ENCODE measurements at regions of chr9 and their contacts with region 1.

Region 1: GRCh38 chr9:4792572-4793458 is at the start of gene RCL1:
- DNase-seq: peak; percentile 96
- ATAC-seq: peak; percentile 99 to 100
- total RNA-seq, gene RCL1: 6.0 to 10.1 TPM

Region 2: DNA sequence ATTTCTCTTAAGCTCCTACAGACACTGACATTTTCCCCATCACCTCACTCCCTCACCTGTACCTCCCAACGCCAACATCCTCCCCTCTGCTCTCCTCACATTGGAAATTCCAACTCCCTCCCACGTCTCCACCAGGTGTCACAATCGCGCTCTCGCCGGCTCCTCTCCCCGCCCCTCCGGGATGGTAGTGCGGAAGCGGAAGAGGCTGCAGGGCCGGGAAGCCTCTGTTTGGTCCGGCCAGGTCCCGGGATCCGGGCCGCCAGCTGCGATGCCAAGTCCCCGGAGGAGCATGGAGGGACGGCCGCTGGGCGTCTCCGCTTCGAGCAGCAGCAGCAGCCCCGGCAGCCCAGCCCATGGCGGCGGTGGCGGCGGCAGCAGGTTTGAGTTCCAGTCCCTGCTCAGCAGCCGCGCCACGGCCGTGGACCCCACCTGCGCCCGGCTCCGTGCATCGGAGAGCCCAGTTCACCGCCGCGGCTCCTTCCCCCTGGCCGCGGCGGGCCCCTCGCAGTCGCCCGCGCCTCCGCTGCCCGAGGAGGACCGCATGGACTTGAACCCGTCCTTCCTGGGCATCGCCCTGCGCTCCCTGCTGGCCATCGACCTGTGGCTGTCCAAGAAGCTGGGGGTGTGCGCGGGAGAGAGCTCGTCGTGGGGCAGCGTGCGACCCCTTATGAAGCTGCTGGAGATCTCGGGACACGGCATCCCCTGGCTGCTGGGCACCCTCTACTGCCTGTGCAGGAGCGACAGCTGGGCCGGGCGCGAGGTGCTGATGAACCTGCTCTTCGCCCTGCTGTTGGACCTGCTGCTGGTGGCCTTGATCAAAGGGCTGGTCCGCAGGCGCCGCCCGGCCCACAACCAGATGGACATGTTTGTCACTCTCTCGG is 130.5 kb before region 1 on chr9 and contains the start of gene PLPP6:
- intact Hi-C with region 1: loop called in 1 of 2 experiments (anchors 5 kb)
- DNase-seq: peak; percentile 90
- ATAC-seq: peak; percentile 96
- total RNA-seq, gene PLPP6: 3.1 to 3.4 TPM

Region 3: DNA sequence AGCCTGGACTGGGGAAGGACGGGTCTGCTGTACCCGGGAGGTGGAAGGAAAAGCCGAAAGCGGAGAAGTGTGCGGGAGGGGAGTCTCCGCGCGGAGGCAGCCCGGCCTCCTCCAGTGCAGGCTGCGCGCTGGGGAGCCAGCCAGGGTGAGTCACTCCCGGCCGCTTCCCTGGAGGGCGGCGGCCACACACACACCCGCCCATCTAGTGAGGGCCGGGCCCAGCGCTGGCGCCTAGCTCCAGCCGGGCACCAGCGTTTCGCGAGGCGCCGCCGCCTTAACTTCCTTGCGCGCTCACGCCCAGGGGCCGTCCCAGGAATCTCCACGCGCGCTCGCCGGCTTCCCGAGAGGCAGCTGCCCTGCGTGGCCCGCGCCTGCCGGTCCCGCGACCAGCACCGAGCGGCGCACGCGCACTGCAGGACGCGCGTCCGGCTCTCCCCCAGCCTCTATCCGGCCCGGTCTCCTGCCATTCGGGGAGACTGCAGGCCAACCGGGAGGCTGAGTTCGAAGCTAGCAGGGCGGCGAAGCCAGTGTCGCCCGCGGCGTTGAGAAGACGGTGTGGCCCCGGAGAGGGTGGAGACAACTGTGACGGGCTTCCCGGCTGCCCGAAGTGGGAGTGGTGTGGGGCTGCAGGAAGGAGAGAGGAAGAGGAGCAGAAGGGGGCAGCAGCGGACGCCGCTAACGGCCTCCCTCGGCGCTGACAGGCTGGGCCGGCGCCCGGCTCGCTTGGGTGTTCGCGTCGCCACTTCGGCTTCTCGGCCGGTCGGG is 192.0 kb after region 1 on chr9 and contains the start of gene JAK2:
- intact Hi-C with region 1: loop called in 1 of 2 experiments (anchors 10 kb)
- DNase-seq: peak; percentile 94
- ATAC-seq: peak; percentile 92 to 98
- total RNA-seq, gene JAK2: 11.4 to 11.8 TPM